Panc1 (cell line): ENCODE measurements at regions of chr9 and their contacts with region 1.

Region 1: GRCh38 chr9:38062498-38063361 is 6.3 kb downstream of the SHB start:
- DNase-seq: no peak
- ATAC-seq: peak; percentile 15
- H3K4me3 ChIP-seq: peak overlapping the region; percentile 82 to 93
- H3K27ac ChIP-seq: peak overlapping the region; percentile 89
- H3K4me1 ChIP-seq: peaks cover 58% of the 10 kb centered on the region
- H3K27me3 ChIP-seq: no peaks in the 10 kb centered on the region
- CTCF ChIP-seq: no peak

Region 2: GRCh38 chr9:38026840-38027527 is 35.7 kb before region 1 on chr9:
- CTCF ChIA-PET with region 1: no interaction called
- POLR2A ChIA-PET with region 1: interaction called, 10 read pairs
- in situ Hi-C with region 1: no loop called
- intact Hi-C with region 1: no loop called
- DNase-seq: no peak
- ATAC-seq: no peak
- H3K4me3 ChIP-seq: no peak overlapping the region
- H3K27ac ChIP-seq: peak overlapping the region; percentile 93
- H3K4me1 ChIP-seq: peaks cover 99% of the 10 kb centered on the region
- H3K27me3 ChIP-seq: no peaks in the 10 kb centered on the region
- CTCF ChIP-seq: no peak